ENCODE measurements at regions of chr9 and their contacts with region 1.

Region 1: DNA sequence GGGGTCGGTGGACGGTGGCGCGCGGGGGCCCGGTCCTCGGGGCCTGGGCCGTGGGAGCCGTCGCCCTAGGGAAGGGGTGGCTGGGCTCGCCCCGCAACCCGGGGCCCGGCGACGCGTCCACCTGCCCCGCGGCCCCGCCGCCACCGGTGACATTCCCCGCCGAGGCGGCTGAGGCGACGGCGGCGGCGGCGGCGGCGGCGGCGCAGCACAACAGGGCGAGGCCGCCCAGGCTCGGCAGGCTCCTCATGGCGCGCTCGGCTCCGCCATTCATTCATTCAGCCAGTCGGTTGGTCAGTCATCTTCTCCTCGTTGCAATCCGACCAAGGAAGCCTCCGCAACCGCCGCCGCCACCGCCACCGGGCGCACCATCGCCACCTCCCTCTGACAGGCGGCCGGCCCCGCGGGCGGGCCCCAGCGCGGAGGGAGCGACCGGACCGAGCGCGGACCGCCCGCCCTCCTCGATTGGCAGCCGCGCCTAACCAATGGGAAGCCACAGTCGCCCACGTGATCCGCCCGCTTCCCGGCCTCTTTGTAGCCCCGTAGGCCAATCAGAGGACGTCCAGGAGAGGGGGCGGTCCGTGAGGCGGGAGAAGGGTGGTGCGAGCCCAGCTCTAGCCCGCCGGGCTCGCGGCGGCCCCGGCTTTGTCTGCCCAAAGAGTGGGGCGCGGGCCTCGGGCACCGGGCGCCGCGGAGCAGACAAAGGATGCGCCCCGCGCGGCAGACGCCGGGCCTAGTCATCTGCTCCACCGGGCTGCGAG is at the start of gene MEGF9:
- DNase-seq: peak; percentile 99
- H3K4me3 ChIP-seq: peak within 1 kb of the TSS; percentile 87 to 95 (median 90)
- H3K27ac ChIP-seq: peak within 1 kb of the TSS; percentile 84 to 91 (median 86)
- H3K4me1 ChIP-seq: peaks cover 0 to 39% (median 30%) of the 10 kb centered on the region in 4 donors
- H3K27me3 ChIP-seq: no peaks in the 10 kb centered on the region
- CTCF ChIP-seq: no peak
- EP300 ChIP-seq: no peak
- POLR2A ChIP-seq: no peak
- total RNA-seq, gene MEGF9: 11.8 to 21.0 (median 15.7) TPM

Region 2: GRCh38 chr9:120562861-120563443 is 151.3 kb before region 1 on chr9:
- intact Hi-C with region 1: no loop called
- DNase-seq: no peak
- H3K4me3 ChIP-seq: no peak overlapping the region
- H3K27ac ChIP-seq: no peak overlapping the region
- H3K4me1 ChIP-seq: peaks cover 0 to 4% (median 0%) of the 10 kb centered on the region in 4 donors
- H3K27me3 ChIP-seq: no peaks in the 10 kb centered on the region
- CTCF ChIP-seq: no peak
- EP300 ChIP-seq: no peak
- POLR2A ChIP-seq: no peak

Region 3: DNA sequence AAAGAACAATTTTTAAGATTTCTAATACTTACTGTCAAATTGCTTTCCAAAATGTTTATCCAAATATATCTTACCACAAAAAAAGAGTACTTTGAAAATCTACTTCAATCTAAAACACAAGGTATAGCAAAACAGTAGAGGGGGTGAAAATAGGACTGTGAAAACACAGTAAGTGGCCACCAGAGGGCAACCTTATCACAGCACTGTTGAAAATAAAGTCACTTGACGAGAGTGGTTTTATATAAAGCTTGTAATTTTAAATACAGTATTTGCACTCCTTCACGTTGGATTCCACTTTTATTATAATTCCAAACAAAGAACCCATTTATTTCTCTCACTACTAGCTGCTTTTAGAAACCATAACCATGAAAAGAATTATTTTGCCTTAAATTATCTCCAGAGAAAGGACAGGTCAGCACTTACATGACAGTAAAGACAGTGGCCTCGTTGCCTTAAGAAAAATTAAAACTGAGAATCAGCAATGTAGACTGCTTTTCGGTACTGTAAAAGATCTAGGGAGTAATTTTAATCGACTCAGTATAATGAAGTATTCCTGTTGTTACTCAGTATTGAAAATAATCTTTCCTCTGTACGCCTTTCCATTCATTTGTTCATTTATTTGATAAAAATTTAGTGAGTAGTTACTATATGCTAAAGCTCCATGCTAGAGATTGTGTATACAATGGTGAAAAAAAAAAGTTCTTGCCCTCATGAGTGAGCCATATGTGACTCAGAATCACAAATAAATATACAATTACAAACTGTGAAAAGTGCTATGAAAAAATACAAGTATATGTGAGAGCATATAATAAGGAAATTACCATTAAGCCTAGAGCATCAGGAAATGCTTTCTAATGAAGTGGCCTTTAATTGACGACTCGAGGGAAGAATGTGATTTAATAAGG is 94.3 kb before region 1 on chr9:
- intact Hi-C with region 1: loop called (anchors 5 kb)
- DNase-seq: no peak
- H3K4me3 ChIP-seq: no peak overlapping the region
- H3K27ac ChIP-seq: no peak overlapping the region
- H3K4me1 ChIP-seq: peaks cover 0 to 3% (median 0%) of the 10 kb centered on the region in 4 donors
- H3K27me3 ChIP-seq: no peaks in the 10 kb centered on the region
- CTCF ChIP-seq: peak; percentile 36 to 84 (median 73)
- EP300 ChIP-seq: no peak
- POLR2A ChIP-seq: no peak

Region 4: GRCh38 chr9:120792898-120793765 is 78.9 kb after region 1 on chr9 and contains the start of gene FBXW2:
- intact Hi-C with region 1: loop called (anchors 2 kb)
- DNase-seq: peak; percentile 95
- H3K4me3 ChIP-seq: peak within 1 kb of the TSS; percentile 69 to 95 (median 90)
- H3K27ac ChIP-seq: peak within 1 kb of the TSS; percentile 86 to 94 (median 91)
- H3K4me1 ChIP-seq: peaks cover 0 to 39% (median 30%) of the 10 kb centered on the region in 4 donors
- H3K27me3 ChIP-seq: no peaks in the 10 kb centered on the region
- CTCF ChIP-seq: peak in 1 of 4 experiments; percentile 31
- EP300 ChIP-seq: peak in 1 of 4 donors; percentile 35
- POLR2A ChIP-seq: peak; percentile 91 to 94
- total RNA-seq, gene FBXW2: 30.9 to 61.8 (median 36.3) TPM